ENCODE measurements at regions of chr19 and their contacts with region 1.

Region 1: GRCh38 chr19:55258828-55259539 is at the start of gene PPP6R1:
- DNase-seq: peak; percentile 98
- ATAC-seq: peak; percentile 77
- H3K4me3 ChIP-seq: peak within 1 kb of the TSS; percentile 70 to 90 (median 80)
- H3K4me3 Mint-ChIP-seq: peak within 1 kb of the TSS; percentile 96
- H3K27ac ChIP-seq: peak within 1 kb of the TSS; percentile 67 to 96
- H3K27ac Mint-ChIP-seq: peak within 1 kb of the TSS; percentile 99
- H3K4me1 ChIP-seq: peaks cover 43 to 49% of the 10 kb centered on the region in 2 donors
- H3K4me1 Mint-ChIP-seq: peaks cover 52% of the 10 kb centered on the region
- H3K27me3 ChIP-seq: no peaks in the 10 kb centered on the region
- H3K27me3 Mint-ChIP-seq: no peaks in the 10 kb centered on the region
- CTCF ChIP-seq: no peak
- total RNA-seq, gene PPP6R1: 193 and 195 TPM in 2 replicates

Region 2: GRCh38 chr19:55279770-55280643 is 21.0 kb after region 1 on chr19 and contains the start of gene HSPBP1:
- CTCF ChIA-PET with region 1: interaction called, 56 read pairs
- POLR2A ChIA-PET with region 1: interaction called, 44 read pairs
- intact Hi-C with region 1: loop called (anchors 1 kb)
- DNase-seq: peak; percentile 99
- ATAC-seq: peak; percentile 85
- H3K4me3 ChIP-seq: peak within 1 kb of the TSS; percentile 63 to 83 (median 71)
- H3K4me3 Mint-ChIP-seq: peak within 1 kb of the TSS; percentile 99
- H3K27ac ChIP-seq: peak within 1 kb of the TSS; percentile 87 to 96
- H3K27ac Mint-ChIP-seq: peak within 1 kb of the TSS; percentile 99
- H3K4me1 ChIP-seq: peaks cover 56 to 71% of the 10 kb centered on the region in 2 donors
- H3K4me1 Mint-ChIP-seq: peaks cover 68% of the 10 kb centered on the region
- H3K27me3 ChIP-seq: peaks cover 0 to 9% (median 3%) of the 10 kb centered on the region in 4 experiments
- H3K27me3 Mint-ChIP-seq: peaks cover 7% of the 10 kb centered on the region
- CTCF ChIP-seq: no peak
- total RNA-seq, gene HSPBP1: 15.6 and 18.2 TPM in 2 replicates

Region 3: DNA sequence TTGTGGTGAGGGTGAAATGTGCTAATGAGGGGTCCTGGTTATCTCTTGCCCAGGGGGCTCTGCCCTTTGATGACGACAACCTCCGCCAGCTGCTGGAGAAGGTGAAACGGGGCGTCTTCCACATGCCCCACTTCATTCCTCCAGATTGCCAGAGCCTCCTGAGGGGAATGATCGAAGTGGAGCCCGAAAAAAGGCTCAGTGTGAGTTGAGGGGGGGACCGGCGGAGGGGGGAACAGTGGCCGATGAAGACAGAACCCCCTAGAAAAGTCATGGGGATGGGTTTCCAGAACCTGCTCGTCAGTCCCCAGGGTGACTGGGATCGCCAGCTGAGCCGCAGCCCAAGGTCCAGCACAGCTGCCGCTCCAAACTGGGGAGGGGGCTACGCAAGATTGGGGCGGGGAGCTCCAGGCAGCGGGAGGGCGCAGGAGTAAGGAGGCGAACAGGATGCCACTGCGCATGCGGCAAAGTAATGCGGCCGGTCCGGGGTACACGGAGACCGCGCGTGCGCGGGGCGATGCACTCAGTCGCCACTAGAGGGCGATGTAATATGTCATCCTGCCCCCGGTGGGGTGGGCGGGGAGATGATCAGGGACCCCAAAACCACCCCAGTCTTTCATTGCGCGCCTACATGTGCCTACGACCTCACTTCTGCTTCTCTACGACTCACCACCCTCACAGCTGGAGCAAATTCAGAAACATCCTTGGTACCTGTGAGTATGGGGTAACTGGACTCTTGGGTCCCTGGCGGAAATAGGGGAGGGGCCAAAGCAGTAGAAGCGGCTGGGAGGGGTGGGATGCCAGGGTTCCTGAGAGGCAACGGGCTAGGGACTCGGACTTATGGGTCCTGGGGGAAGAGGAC is 42.7 kb after region 1 on chr19:
- CTCF ChIA-PET with region 1: interaction called, 17 read pairs
- POLR2A ChIA-PET with region 1: interaction called, 4 read pairs
- intact Hi-C with region 1: no loop called
- DNase-seq: peak; percentile 95
- ATAC-seq: peak; percentile 91
- H3K4me3 ChIP-seq: peak overlapping the region in 4 of 5 experiments; percentile 35 to 53 (median 49)
- H3K4me3 Mint-ChIP-seq: peak overlapping the region; percentile 90
- H3K27ac ChIP-seq: peak overlapping the region; percentile 25 to 64
- H3K27ac Mint-ChIP-seq: peak overlapping the region; percentile 87
- H3K4me1 ChIP-seq: peaks cover 8 to 15% of the 10 kb centered on the region in 2 donors
- H3K4me1 Mint-ChIP-seq: peaks cover 12% of the 10 kb centered on the region
- H3K27me3 ChIP-seq: no peaks in the 10 kb centered on the region
- H3K27me3 Mint-ChIP-seq: peaks cover 6% of the 10 kb centered on the region
- CTCF ChIP-seq: peak; percentile 92

Region 4: GRCh38 chr19:55385740-55386529 is 127.0 kb after region 1 on chr19 and contains the start of gene RPL28:
- CTCF ChIA-PET with region 1: interaction called, 5 read pairs
- POLR2A ChIA-PET with region 1: interaction called, 9 read pairs
- intact Hi-C with region 1: loop called (anchors 1 kb)
- DNase-seq: peak; percentile 99
- ATAC-seq: peak; percentile 81
- H3K4me3 ChIP-seq: peak within 1 kb of the TSS; percentile 85 to 99 (median 97)
- H3K4me3 Mint-ChIP-seq: peak within 1 kb of the TSS; percentile 100
- H3K27ac ChIP-seq: peak within 1 kb of the TSS; percentile 96
- H3K27ac Mint-ChIP-seq: peak within 1 kb of the TSS; percentile 100
- H3K4me1 ChIP-seq: peaks cover 40 to 57% of the 10 kb centered on the region in 2 donors
- H3K4me1 Mint-ChIP-seq: peaks cover 68% of the 10 kb centered on the region
- H3K27me3 ChIP-seq: no peaks in the 10 kb centered on the region
- H3K27me3 Mint-ChIP-seq: no peaks in the 10 kb centered on the region
- CTCF ChIP-seq: no peak
- total RNA-seq, gene RPL28: 2,397 and 2,578 TPM in 2 replicates

Region 5: GRCh38 chr19:55461259-55461973 is 202.4 kb after region 1 on chr19 and contains the start of gene ISOC2:
- CTCF ChIA-PET with region 1: interaction called, 4 read pairs
- POLR2A ChIA-PET with region 1: no interaction called
- intact Hi-C with region 1: loop called (anchors 1 kb)
- DNase-seq: peak; percentile 100
- ATAC-seq: peak; percentile 97
- H3K4me3 ChIP-seq: peak within 1 kb of the TSS; percentile 56 to 98 (median 90)
- H3K4me3 Mint-ChIP-seq: peak within 1 kb of the TSS; percentile 87
- H3K27ac ChIP-seq: peak within 1 kb of the TSS; percentile 73 to 78
- H3K27ac Mint-ChIP-seq: peak within 1 kb of the TSS; percentile 81
- H3K4me1 ChIP-seq: peaks cover 10 to 14% of the 10 kb centered on the region in 2 donors
- H3K4me1 Mint-ChIP-seq: peaks cover 20% of the 10 kb centered on the region
- H3K27me3 ChIP-seq: no peaks in the 10 kb centered on the region
- H3K27me3 Mint-ChIP-seq: no peaks in the 10 kb centered on the region
- CTCF ChIP-seq: no peak
- total RNA-seq, gene ISOC2: 10.0 and 11.1 TPM in 2 replicates

Region 6: GRCh38 chr19:55503502-55504251 is 244.7 kb after region 1 on chr19:
- CTCF ChIA-PET with region 1: interaction called, 4 read pairs
- POLR2A ChIA-PET with region 1: interaction called, 12 read pairs
- intact Hi-C with region 1: no loop called
- DNase-seq: peak; percentile 98
- ATAC-seq: peak; percentile 96
- H3K4me3 ChIP-seq: peak overlapping the region in 4 of 5 experiments; percentile 67 to 71 (median 69)
- H3K4me3 Mint-ChIP-seq: peak overlapping the region; percentile 93
- H3K27ac ChIP-seq: peak overlapping the region; percentile 91 to 94
- H3K27ac Mint-ChIP-seq: peak overlapping the region; percentile 94
- H3K4me1 ChIP-seq: peaks cover 4 to 16% of the 10 kb centered on the region in 2 donors
- H3K4me1 Mint-ChIP-seq: peaks cover 16% of the 10 kb centered on the region
- H3K27me3 ChIP-seq: no peaks in the 10 kb centered on the region
- H3K27me3 Mint-ChIP-seq: no peaks in the 10 kb centered on the region
- CTCF ChIP-seq: peak; percentile 99

Region 7: DNA sequence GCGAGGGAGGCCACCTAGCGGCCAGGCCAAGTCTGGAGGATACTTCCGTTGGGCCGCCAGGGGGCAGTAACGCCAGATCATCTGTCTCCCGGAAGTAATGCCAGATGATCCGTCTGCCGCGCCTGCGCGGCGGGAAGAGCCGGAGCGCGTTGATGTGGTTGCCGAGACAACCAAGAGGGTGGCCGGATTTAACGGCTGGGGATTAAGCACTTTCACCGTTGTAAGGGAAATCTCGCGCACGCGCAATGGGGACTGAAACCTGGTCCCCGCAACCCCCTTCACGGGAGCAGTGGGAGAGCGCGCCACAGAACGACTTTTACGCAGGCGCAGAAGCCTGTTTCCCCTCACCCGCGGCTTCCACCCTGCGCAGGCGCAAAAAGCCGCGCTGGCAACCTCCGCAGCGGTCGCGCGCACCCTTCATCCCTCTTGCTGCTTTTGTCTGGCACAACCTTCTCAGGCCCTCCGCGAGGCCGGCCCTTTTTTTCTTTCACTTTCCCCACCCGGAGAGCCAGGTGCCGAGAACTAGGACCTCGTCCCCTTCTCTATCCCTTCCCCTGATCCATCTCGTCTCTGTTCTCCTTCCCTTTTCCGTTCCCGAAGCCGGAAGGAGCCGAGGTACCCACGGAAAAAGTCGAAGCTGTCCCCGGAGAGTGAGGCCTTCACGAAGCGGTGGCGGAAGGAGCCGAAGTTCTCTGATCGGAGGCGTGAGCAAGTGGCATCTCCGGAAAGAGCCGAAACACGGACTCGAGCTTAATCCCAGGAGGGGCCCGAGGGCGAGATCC is 395.0 kb after region 1 on chr19:
- CTCF ChIA-PET with region 1: interaction called, 3 read pairs
- POLR2A ChIA-PET with region 1: interaction called, 5 read pairs
- intact Hi-C with region 1: loop called (anchors 1 kb)
- DNase-seq: peak; percentile 100
- ATAC-seq: peak; percentile 77
- H3K4me3 ChIP-seq: peak overlapping the region; percentile 66 to 98 (median 92)
- H3K4me3 Mint-ChIP-seq: peak overlapping the region; percentile 93
- H3K27ac ChIP-seq: peak overlapping the region; percentile 98 to 100
- H3K27ac Mint-ChIP-seq: peak overlapping the region; percentile 96
- H3K4me1 ChIP-seq: peaks cover 41 to 53% of the 10 kb centered on the region in 2 donors
- H3K4me1 Mint-ChIP-seq: peaks cover 56% of the 10 kb centered on the region
- H3K27me3 ChIP-seq: no peaks in the 10 kb centered on the region
- H3K27me3 Mint-ChIP-seq: no peaks in the 10 kb centered on the region
- CTCF ChIP-seq: peak; percentile 100